Activated CD4-positive, alpha-beta memory T cell treated with anti-CD3 and anti-CD28 coated beads, Interleukin-2, amount 10 ng/mL, durations not matched to agents 7 days and 5 days (primary cell): ENCODE measurements at regions of chr14 and their contacts with region 1.

Region 1: DNA sequence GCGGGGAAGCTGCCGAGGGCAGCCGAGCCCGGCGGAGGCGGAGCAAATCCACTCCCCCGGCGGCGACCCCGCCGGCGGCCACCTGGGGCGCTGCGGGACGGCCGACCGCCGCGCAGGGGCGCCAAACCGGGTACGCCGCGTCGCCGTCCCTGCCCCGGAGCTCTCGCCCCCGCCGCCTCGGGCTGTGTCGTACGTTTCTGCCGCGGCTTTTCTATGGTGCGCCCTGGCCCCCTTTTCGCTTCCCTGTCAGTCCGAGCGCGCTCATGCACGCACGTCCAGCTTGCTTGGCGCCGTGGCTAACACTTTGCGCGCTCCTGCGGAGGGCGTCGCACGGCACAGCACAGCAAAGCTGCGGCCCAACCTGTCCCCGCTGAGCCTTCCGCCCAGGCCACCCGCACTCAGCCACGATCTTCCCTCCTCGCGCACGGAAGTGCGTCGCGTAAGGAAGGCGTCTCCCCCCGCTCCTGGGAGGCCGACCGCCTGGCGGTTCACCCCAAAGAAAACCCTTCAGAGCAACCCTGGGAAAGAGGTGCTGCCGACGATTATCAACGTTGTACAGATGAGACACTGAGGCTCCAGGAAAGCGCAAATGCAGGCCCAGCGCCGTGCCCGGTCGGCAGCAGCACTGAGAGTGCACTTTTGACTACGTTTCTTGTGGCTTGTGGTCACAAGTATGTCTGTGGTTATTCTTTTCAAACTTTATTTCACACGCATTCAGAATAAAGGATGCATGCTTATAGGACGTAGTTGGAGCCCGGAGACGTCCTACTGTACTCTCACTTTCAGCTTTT is at the start of gene HECTD1:
- DNase-seq: peak; percentile 88
- H3K4me3 Mint-ChIP-seq: peak within 1 kb of the TSS; percentile 88
- H3K27ac Mint-ChIP-seq: peak within 1 kb of the TSS; percentile 100
- H3K4me1 Mint-ChIP-seq: peaks cover 50% of the 10 kb centered on the region
- H3K27me3 Mint-ChIP-seq: peaks cover 6% of the 10 kb centered on the region
- total RNA-seq, gene HECTD1: 85.1 to 92.3 TPM

Region 2: DNA sequence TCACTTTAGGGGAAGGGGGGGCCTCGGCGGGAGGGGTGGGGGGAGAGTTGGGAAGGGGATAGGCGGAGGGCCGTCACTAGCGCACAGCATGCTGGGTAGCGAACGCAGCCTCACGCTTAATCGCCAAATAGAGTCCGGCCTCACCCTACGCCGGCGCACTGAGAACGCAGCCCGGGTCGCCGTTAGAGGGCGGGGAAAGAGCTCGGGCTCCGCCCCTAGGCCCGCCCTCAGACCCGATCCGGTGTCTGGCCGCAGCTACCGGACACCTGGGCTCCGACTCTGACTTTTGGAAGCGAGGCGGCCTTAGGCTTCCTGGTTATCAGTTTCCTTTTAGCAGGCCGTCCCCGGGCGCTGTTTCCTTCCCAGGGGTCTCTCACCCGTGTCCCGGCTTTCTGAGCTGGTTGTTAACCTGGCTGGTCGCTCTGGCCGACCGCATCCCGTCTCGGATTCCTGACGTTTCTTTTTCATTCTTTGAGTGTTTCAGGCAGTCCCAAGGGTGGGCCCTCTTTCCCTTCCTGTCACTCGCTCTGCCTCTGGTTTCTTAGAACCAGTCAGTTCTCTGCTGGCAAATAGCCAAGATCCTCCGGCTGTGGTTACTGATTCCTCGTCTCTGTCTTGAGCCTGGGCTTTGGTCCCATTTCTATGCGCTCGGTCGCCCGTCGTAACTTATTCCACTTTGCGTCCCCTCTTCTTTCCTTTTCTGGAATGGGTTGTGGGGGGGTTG is 181.4 kb before region 1 on chr14:
- CTCF ChIA-PET with region 1: interaction called, 4 read pairs
- POLR2A ChIA-PET with region 1: interaction called, 47 read pairs
- DNase-seq: peak; percentile 94
- H3K4me3 Mint-ChIP-seq: peak overlapping the region; percentile 94
- H3K27ac Mint-ChIP-seq: peak overlapping the region; percentile 91
- H3K4me1 Mint-ChIP-seq: peaks cover 53% of the 10 kb centered on the region
- H3K27me3 Mint-ChIP-seq: no peaks in the 10 kb centered on the region

Region 3: DNA sequence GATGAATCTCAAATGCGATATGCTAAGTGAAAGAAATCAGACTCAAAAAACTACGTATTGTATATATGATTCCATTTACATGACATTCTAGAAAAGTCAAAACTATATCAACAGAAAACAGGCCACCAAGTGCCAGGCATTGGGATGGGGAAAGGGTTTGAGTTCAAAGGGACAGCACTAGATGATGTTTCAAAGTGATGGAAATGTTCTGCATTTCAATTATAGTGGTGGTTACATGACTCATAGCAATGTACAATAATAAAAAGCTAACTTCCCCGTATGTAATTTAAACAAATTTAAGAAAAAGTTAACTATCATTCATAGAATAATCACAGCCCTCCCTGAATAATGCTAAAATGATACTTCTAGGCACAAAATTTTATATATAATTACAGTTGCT is 13.9 kb before region 1 on chr14:
- CTCF ChIA-PET with region 1: interaction called, 15 read pairs
- POLR2A ChIA-PET with region 1: interaction called, 38 read pairs
- DNase-seq: no peak
- H3K4me3 Mint-ChIP-seq: no peak overlapping the region
- H3K27ac Mint-ChIP-seq: no peak overlapping the region
- H3K4me1 Mint-ChIP-seq: peaks cover 32% of the 10 kb centered on the region
- H3K27me3 Mint-ChIP-seq: no peaks in the 10 kb centered on the region

Region 4: GRCh38 chr14:31377433-31377832 is 169.5 kb after region 1 on chr14:
- CTCF ChIA-PET with region 1: interaction called, 10 read pairs
- POLR2A ChIA-PET with region 1: interaction called, 3 read pairs
- DNase-seq: no peak
- H3K4me3 Mint-ChIP-seq: no peak overlapping the region
- H3K27ac Mint-ChIP-seq: no peak overlapping the region
- H3K4me1 Mint-ChIP-seq: peaks cover 9% of the 10 kb centered on the region
- H3K27me3 Mint-ChIP-seq: no peaks in the 10 kb centered on the region

Region 5: DNA sequence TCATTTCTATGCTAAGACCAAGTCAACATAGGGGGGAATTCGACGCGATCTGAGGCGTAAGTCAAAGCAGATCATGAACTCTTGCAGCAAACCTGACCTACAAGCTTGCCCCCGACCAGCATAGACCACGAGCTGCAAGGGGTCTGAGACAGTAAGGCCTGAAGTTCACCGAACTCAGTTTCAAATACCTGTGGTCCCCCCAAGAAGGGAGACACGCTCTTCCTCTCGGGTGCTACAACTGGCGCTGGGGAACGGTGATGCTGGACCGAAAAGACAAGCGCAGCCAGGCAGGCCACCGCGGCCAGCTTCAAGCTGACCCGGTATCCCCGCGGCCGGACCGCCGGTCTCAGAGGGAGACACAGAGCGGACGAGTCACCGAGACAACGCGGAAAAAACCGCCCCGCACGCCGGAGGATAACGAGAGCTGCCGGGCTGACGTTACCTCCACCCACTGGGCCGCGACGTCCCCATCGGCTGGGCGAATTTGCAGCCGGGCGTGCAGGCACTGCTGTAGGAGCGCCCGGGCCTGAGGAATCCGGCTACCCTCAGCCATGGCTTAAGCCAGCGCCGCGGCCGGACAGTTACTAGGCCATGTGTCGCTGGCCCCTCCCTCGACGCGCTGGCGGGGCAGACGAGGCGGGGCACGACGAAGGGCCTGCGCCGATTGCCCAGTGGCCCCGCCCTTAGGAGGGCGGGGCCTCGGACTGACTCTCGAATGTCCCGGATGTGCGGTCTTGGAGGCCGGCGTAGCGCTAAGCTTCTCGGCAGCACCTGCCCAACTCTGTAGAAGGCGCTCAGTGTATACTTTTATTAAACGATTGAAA is 249.1 kb after region 1 on chr14 and contains the start of gene DTD2:
- CTCF ChIA-PET with region 1: interaction called, 9 read pairs
- POLR2A ChIA-PET with region 1: interaction called, 19 read pairs
- DNase-seq: peak; percentile 93
- H3K4me3 Mint-ChIP-seq: peak within 1 kb of the TSS; percentile 97
- H3K27ac Mint-ChIP-seq: peak within 1 kb of the TSS; percentile 91
- H3K4me1 Mint-ChIP-seq: peaks cover 30% of the 10 kb centered on the region
- H3K27me3 Mint-ChIP-seq: peaks cover 1% of the 10 kb centered on the region
- total RNA-seq, gene DTD2: 12.8 to 13.0 TPM

Region 6: DNA sequence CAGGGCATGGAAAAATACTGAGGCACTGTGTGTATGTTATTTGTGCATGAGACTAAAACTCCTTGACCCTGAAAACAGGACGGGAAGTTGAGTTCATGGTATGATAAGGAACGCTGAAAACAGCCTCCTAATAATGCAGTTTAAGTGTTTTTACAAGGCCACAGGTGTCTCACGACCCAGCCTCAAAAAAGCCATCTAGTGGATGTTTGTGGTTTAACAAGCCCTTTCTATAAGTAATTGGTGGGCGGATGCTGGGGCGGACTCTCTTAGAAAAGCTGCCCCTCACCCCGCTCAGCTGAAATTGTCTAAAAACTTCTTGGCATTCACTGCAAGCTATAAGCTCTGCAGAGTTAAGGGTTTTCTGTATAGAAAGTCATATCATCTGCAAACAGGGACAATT is 537.8 kb after region 1 on chr14:
- CTCF ChIA-PET with region 1: no interaction called
- POLR2A ChIA-PET with region 1: no interaction called
- DNase-seq: no peak
- H3K4me3 Mint-ChIP-seq: no peak overlapping the region
- H3K27ac Mint-ChIP-seq: no peak overlapping the region
- H3K4me1 Mint-ChIP-seq: no peaks in the 10 kb centered on the region
- H3K27me3 Mint-ChIP-seq: no peaks in the 10 kb centered on the region